ENCODE measurements at regions of chr10 and their contacts with region 1.

Region 1: GRCh38 chr10:69092959-69093850 is 5.3 kb downstream of the SRGN start:
- DNase-seq: peak; percentile 16 to 88
- ATAC-seq: peak; percentile 61 to 84 (median 74)
- H3K4me3 ChIP-seq: peak overlapping the region in 3 of 10 donors; percentile 6 to 71 (median 33)
- H3K27ac ChIP-seq: peak overlapping the region in 4 of 10 donors; percentile 1 to 98 (median 42)
- H3K4me1 ChIP-seq: peaks cover 0 to 85% (median 7%) of the 10 kb centered on the region in 9 donors
- H3K27me3 ChIP-seq: no peaks in the 10 kb centered on the region
- CTCF ChIP-seq: peak; percentile 72 to 87 (median 84)

Region 2: GRCh38 chr10:68934994-68935393 is 158.2 kb before region 1 on chr10:
- intact Hi-C with region 1: no loop called
- DNase-seq: no peak
- ATAC-seq: no peak
- H3K4me3 ChIP-seq: no peak overlapping the region
- H3K27ac ChIP-seq: no peak overlapping the region
- H3K4me1 ChIP-seq: peaks cover 0 to 6% (median 0%) of the 10 kb centered on the region in 9 donors
- H3K27me3 ChIP-seq: no peaks in the 10 kb centered on the region
- CTCF ChIP-seq: no peak

Region 3: DNA sequence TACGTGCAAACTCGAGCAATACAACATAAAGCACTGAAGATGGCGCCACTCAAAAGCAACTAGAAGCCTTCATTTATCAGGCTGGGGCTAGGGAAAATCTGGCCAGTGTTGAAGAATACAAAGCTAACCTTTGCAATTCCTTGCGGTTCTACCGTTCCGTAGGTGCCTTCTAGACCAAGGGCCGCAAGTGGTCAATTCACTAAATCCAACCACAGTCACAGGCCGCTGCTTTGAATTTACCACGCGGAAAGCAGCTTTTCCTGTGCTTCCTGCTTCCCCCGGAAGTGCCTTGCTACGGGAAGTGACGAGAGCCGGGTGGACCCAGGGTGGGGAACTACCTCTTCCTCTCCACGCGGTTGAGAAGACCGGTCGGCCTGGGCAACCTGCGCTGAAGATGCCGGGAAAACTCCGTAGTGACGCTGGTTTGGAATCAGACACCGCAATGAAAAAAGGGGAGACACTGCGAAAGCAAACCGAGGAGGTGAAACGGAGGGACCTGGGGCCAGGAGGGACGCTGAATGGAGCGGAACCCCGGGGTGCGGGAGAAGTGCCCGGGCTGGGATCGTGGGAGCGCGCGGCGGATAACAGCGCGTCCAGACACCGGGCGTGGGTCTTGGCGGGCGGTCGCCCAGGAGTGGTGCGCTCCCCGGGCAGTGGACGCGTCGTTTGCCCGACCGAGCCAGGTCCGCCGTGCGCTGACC is 137.2 kb before region 1 on chr10 and contains the start of gene DDX21:
- intact Hi-C with region 1: loop called in 1 of 10 experiments (anchors 1 kb)
- DNase-seq: peak; percentile 84 to 92
- ATAC-seq: peak; percentile 97 to 99 (median 98)
- H3K4me3 ChIP-seq: peak within 1 kb of the TSS; percentile 59 to 99 (median 90)
- H3K27ac ChIP-seq: peak within 1 kb of the TSS; percentile 26 to 95 (median 90)
- H3K4me1 ChIP-seq: peaks cover 3 to 46% (median 22%) of the 10 kb centered on the region in 9 donors
- H3K27me3 ChIP-seq: no peaks in the 10 kb centered on the region
- CTCF ChIP-seq: peak; percentile 25 to 73 (median 52)
- total RNA-seq, gene DDX21: 17.6 to 52.4 (median 25.5) TPM

Region 4: GRCh38 chr10:68988530-68989316 is 104.5 kb before region 1 on chr10 and contains the start of gene KIFBP:
- intact Hi-C with region 1: loop called in 1 of 10 experiments (anchors 5 kb)
- DNase-seq: peak; percentile 84 to 96
- ATAC-seq: peak; percentile 95 to 98 (median 97)
- H3K4me3 ChIP-seq: peak within 1 kb of the TSS; percentile 76 to 98 (median 93)
- H3K27ac ChIP-seq: peak within 1 kb of the TSS; percentile 77 to 93 (median 89)
- H3K4me1 ChIP-seq: peaks cover 5 to 52% (median 48%) of the 10 kb centered on the region in 9 donors
- H3K27me3 ChIP-seq: no peaks in the 10 kb centered on the region
- CTCF ChIP-seq: peak in 8 of 9 donors; percentile 28 to 87 (median 59)
- total RNA-seq, gene KIFBP: 42.3 to 67.9 (median 53.2) TPM

Region 5: DNA sequence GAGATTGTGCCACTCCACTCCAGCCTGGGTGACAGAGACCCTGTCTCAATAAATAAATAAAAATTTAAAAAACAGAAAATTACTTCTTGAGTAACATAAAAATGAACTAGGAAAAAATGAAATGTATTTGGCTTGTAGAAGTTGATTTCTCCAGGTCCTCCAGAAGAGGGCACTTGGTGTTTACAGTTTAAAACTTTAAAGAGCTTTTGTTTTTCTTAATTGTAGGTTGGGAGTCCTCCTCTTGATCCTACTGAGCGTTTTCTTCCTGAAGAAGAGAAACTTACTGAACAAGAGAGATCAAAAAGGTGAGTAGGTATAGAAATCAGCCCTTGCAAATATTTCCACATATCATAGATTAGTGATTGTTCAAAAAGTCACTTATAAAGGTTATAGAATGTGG is 88.4 kb before region 1 on chr10:
- intact Hi-C with region 1: loop called (anchors 1 to 5 kb)
- DNase-seq: no peak
- ATAC-seq: peak in 4 of 8 donors; percentile 45 to 68 (median 65)
- H3K4me3 ChIP-seq: no peak overlapping the region
- H3K27ac ChIP-seq: peak overlapping the region in 3 of 10 donors; percentile 17 to 57 (median 32)
- H3K4me1 ChIP-seq: peaks cover 0 to 8% (median 0%) of the 10 kb centered on the region in 9 donors
- H3K27me3 ChIP-seq: no peaks in the 10 kb centered on the region
- CTCF ChIP-seq: peak in 8 of 9 donors; percentile 34 to 72 (median 61)

Region 6: GRCh38 chr10:69014171-69014570 is 79.0 kb before region 1 on chr10:
- intact Hi-C with region 1: loop called in 4 of 10 experiments (anchors 5 kb)
- DNase-seq: no peak
- ATAC-seq: no peak
- H3K4me3 ChIP-seq: no peak overlapping the region
- H3K27ac ChIP-seq: peak overlapping the region in 1 of 10 donors; percentile 49
- H3K4me1 ChIP-seq: peaks cover 0 to 16% (median 0%) of the 10 kb centered on the region in 9 donors
- H3K27me3 ChIP-seq: no peaks in the 10 kb centered on the region
- CTCF ChIP-seq: no peak

Region 7: DNA sequence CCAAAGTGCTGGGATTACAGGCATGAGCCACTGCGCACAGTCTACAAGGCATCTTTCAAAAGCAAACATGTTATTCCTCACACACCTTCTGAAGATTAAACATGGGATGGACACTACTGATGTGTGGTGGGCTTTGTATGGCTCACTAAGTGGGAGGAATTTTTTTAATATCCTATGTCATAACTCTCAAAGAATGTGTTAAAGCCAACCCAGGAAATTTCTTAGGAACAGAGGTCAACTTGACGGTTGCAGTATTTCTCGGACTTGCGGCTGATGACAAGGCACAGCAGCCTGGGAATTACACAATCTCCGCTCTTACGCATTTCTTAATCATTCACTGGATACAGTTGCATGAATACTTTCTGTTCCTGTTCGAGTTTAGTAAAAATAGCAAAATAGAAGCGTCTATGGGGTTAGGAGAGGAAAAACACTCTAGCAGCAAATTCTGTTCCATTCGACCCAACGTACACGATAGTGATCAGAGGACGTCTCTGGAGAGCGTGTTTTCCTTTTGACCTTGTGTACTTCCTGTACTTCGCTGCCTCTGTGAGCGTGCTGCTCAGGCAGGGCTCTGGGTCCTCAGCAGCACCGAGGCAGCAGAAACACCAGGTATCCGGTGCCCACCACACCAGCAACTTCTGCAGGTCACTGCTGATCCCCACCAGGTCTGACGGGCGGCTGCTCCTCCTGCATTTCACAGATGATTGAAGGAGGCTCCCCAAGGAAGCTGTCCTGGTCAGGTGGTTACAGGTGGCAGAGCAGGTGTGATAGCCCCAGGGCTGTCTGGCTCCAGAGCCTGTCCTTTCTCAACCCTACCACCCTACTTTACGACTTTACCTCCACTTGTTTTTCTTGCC is 31.7 kb before region 1 on chr10:
- intact Hi-C with region 1: loop called in 5 of 10 experiments (anchors 1 to 5 kb)
- DNase-seq: peak; percentile 52 to 76
- ATAC-seq: peak; percentile 83 to 91 (median 86)
- H3K4me3 ChIP-seq: peak overlapping the region in 7 of 10 donors; percentile 4 to 35 (median 19)
- H3K27ac ChIP-seq: peak overlapping the region; percentile 84 to 95 (median 90)
- H3K4me1 ChIP-seq: peaks cover 5 to 98% (median 49%) of the 10 kb centered on the region in 9 donors
- H3K27me3 ChIP-seq: no peaks in the 10 kb centered on the region
- CTCF ChIP-seq: no peak

Region 8: DNA sequence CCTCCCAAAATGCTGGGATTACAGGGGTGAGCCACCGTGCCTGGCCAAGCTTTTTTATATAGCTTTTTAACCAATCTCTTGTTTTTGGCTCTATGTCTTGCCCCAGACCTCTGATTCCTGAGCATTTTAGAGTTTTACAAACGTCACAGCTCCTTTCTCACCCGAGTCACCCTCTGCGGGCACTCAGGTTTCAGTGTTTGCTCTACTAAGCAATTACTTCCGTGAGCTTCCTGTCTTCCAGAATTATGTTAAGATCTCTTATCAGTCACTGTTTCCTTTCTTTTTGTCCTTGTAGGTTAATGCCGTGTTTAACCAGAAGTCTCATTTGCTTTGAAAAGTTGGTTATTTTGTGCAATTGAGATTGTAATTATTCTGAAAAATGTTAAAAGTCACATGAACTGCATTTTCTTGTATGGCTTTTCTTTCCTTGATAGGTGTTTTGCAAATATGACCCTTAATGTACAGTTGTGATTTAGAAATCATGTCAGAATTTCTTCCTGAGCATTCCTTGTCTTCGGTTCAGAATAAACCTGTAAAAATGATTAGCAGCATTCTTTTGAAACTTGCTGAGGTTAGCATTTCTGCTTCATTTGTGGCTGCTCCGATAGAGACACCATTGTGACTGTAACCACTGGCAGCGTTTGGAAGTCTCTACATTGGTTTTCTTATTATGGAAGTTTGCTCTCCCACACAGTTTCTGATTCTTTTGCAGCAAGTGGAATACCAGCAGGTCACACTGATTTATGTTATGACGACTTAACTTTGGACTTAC is 122.4 kb after region 1 on chr10:
- intact Hi-C with region 1: no loop called
- DNase-seq: no peak
- ATAC-seq: no peak
- H3K4me3 ChIP-seq: no peak overlapping the region
- H3K27ac ChIP-seq: peak overlapping the region in 1 of 10 donors; percentile 61
- H3K4me1 ChIP-seq: peaks cover 0 to 37% (median 0%) of the 10 kb centered on the region in 9 donors
- H3K27me3 ChIP-seq: peaks cover 0 to 21% (median 0%) of the 10 kb centered on the region in 7 donors
- CTCF ChIP-seq: no peak

Measured in heart right ventricle (tissue), 16 donors.